CD8-positive, alpha-beta T cell (primary cell): ENCODE measurements at regions of chr3 and their contacts with region 1.

Region 1: GRCh38 chr3:45938864-45939263 is 4.4 kb upstream of the CXCR6 start:
- DNase-seq: peak; percentile 72 to 93 (median 86)
- ATAC-seq: peak; percentile 66
- H3K4me3 ChIP-seq: no peak overlapping the region
- H3K4me3 Mint-ChIP-seq: no peak overlapping the region
- H3K27ac ChIP-seq: no peak overlapping the region
- H3K27ac Mint-ChIP-seq: no peak overlapping the region
- H3K4me1 ChIP-seq: peaks cover 27% of the 10 kb centered on the region
- H3K4me1 Mint-ChIP-seq: peaks cover 39% of the 10 kb centered on the region
- H3K27me3 ChIP-seq: no peaks in the 10 kb centered on the region
- H3K27me3 Mint-ChIP-seq: no peaks in the 10 kb centered on the region
- CTCF ChIP-seq: peak; percentile 63

Region 2: DNA sequence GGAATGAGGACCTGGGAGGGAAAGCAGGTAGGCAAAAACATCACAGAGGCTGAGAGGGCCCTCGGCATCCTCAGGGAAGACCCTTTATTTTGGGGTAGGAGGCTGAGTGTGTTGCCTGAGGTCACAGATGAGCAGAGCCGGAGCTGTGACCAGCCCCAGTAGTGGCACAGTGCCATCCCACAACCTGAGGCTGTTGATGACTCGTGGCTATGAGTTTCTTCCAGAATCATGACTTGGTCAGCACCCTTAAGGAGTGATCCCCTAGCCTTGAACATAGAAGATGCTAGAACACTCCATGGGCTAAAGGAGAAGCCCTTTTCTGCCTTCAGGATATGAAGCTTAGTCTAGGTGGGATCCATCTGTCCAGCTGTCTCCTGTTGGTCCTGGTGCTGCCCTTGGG is 15.1 kb before region 1 on chr3:
- CTCF ChIA-PET with region 1: interaction called, 11 read pairs
- POLR2A ChIA-PET with region 1: no interaction called
- intact Hi-C with region 1: no loop called
- DNase-seq: no peak
- ATAC-seq: no peak
- H3K4me3 ChIP-seq: no peak overlapping the region
- H3K4me3 Mint-ChIP-seq: no peak overlapping the region
- H3K27ac ChIP-seq: no peak overlapping the region
- H3K27ac Mint-ChIP-seq: no peak overlapping the region
- H3K4me1 ChIP-seq: peaks cover 9% of the 10 kb centered on the region
- H3K4me1 Mint-ChIP-seq: peaks cover 9% of the 10 kb centered on the region
- H3K27me3 ChIP-seq: no peaks in the 10 kb centered on the region
- H3K27me3 Mint-ChIP-seq: no peaks in the 10 kb centered on the region
- CTCF ChIP-seq: no peak

Region 3: GRCh38 chr3:45972534-45973402 is 33.9 kb after region 1 on chr3:
- CTCF ChIA-PET with region 1: interaction called, 60 read pairs
- POLR2A ChIA-PET with region 1: interaction called, 18 read pairs
- intact Hi-C with region 1: loop called (anchors 1 to 5 kb)
- DNase-seq: peak in 1 of 9 experiments; percentile 34
- ATAC-seq: no peak
- H3K4me3 ChIP-seq: no peak overlapping the region
- H3K4me3 Mint-ChIP-seq: no peak overlapping the region
- H3K27ac ChIP-seq: peak overlapping the region in 1 of 2 experiments; percentile 46
- H3K27ac Mint-ChIP-seq: peak overlapping the region; percentile 69
- H3K4me1 ChIP-seq: peaks cover 34% of the 10 kb centered on the region
- H3K4me1 Mint-ChIP-seq: peaks cover 78% of the 10 kb centered on the region
- H3K27me3 ChIP-seq: no peaks in the 10 kb centered on the region
- H3K27me3 Mint-ChIP-seq: no peaks in the 10 kb centered on the region
- CTCF ChIP-seq: no peak

Region 4: DNA sequence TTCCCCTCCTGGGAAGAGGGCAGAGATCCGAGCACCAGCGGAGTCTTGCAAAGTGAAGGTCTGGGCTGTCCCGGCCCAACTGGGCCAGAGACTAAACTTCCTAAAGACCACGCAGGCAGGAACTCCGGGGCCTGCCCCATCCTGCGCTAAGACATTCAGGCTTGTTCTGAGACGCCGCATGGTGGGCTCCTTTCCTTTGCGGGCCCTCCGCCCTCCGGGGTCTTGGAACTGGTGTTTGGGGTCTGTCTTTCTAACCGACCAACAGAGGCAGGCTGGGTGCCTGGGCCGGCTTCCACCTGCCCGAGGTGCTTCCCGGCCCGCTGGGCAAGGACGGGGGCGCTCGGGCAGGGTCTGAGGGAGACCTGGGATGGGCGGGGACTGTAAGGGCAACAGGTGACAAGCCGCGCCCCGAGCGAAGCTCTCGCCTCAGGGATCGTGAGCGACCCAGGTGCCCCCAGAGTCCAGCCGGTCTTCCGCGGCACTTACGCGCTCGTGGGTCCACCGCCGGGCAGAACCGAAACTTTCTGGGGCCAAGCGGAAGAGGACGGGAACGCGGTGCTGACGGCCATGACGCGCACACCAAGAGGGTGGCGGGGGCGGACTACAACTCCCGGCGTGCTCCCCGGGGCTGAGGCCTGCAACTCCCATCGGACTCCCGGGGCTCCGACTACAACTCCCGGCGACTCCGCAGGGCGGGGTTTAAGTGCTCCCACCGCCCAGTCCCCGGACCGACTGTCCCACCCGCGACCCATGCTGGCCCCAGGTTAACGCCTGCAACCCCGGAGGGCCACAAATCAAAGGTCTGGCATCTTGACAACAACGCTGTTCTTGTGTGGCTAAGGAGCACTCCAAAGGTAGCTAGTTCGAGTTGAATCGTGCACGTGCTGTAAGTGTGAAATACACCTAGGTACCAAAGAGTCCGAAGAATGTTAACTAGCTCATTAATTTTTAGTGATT is 56.6 kb after region 1 on chr3 and contains the start of gene FYCO1:
- CTCF ChIA-PET with region 1: interaction called, 22 read pairs
- POLR2A ChIA-PET with region 1: interaction called, 28 read pairs
- intact Hi-C with region 1: loop called (anchors 1 to 2 kb)
- DNase-seq: peak; percentile 70 to 93 (median 85)
- ATAC-seq: peak; percentile 78
- H3K4me3 ChIP-seq: peak within 1 kb of the TSS; percentile 77 to 90
- H3K4me3 Mint-ChIP-seq: peak within 1 kb of the TSS; percentile 86
- H3K27ac ChIP-seq: peak within 1 kb of the TSS; percentile 77 to 93
- H3K27ac Mint-ChIP-seq: peak within 1 kb of the TSS; percentile 93
- H3K4me1 ChIP-seq: peaks cover 42% of the 10 kb centered on the region
- H3K4me1 Mint-ChIP-seq: peaks cover 44% of the 10 kb centered on the region
- H3K27me3 ChIP-seq: no peaks in the 10 kb centered on the region
- H3K27me3 Mint-ChIP-seq: no peaks in the 10 kb centered on the region
- CTCF ChIP-seq: no peak
- total RNA-seq, gene FYCO1: 16.6 to 16.7 TPM

Region 5: DNA sequence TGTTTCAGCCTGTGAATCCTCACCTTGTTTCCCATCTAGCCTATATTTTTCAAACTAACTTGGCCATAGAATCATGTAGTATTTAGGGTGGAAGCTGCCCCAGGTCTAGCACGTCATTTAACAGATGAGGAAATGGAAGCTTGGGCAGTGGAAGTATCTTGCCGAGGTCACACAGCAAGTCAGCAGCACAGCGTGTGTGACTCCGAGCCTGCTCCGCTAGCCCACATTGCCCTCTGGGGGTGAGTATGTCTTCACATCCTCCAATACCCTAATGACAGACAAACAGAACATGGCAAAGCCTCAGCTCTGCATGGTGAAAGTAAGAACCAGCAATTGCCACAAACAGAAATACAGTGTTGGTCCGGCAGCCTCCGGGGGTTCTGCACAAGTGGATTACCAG is 429.7 kb after region 1 on chr3:
- CTCF ChIA-PET with region 1: interaction called, 5 read pairs
- POLR2A ChIA-PET with region 1: interaction called, 5 read pairs
- intact Hi-C with region 1: loop called in 1 of 2 experiments (anchors 2 kb)
- DNase-seq: peak; percentile 35 to 89 (median 65)
- ATAC-seq: peak; percentile 72
- H3K4me3 ChIP-seq: no peak overlapping the region
- H3K4me3 Mint-ChIP-seq: peak overlapping the region; percentile 43
- H3K27ac ChIP-seq: peak overlapping the region in 1 of 2 experiments; percentile 82
- H3K27ac Mint-ChIP-seq: peak overlapping the region; percentile 81
- H3K4me1 ChIP-seq: peaks cover 23% of the 10 kb centered on the region
- H3K4me1 Mint-ChIP-seq: peaks cover 52% of the 10 kb centered on the region
- H3K27me3 ChIP-seq: no peaks in the 10 kb centered on the region
- H3K27me3 Mint-ChIP-seq: no peaks in the 10 kb centered on the region
- CTCF ChIP-seq: peak; percentile 53